ENCODE measurements at regions of chr20 and their contacts with region 1.

Region 1: DNA sequence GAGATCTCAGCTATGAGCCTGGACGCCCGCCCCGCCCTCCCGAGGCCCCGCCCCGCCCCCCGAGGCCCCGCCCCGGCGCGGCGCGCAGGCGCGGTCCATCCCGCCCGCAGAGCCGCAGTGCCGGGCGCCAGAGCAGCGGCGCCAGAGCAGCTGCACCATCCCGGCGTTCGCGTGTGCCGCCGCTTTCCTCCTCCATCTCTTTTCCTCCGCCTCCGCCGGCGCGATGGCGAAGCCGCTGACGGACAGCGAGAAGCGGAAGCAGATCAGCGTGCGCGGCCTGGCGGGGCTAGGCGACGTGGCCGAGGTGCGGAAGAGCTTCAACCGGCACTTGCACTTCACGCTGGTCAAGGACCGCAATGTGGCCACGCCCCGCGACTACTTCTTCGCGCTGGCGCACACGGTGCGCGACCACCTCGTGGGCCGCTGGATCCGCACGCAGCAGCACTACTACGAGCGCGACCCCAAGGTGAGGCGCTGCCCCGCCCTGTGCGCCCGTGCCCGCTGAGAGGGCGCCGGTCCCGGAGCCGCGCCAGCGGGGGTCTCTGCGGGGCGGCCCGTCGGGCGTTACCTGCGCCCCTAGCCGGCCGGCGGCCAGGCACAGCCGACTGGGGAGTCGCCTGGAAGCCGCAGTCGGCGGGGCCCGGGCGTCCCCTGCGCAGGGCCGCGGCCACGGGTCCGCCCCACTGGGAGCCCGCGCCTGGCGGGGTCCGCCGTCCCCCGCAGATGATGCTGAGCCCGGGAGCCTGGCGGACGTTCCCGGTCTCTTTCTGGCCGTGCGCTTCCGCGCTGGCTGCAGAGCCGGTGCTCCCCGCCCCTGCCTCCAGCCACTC is at the start of gene PYGB:
- DNase-seq: no peak
- H3K4me3 ChIP-seq: peak within 1 kb of the TSS; percentile 95
- CTCF ChIP-seq: no peak

Region 2: GRCh38 chr20:25195014-25195961 is 52.9 kb before region 1 on chr20 and contains the start of gene ENTPD6:
- CTCF ChIA-PET with region 1: interaction called, 14 read pairs
- POLR2A ChIA-PET with region 1: interaction called, 5 read pairs
- DNase-seq: peak; percentile 5
- H3K4me3 ChIP-seq: peak within 1 kb of the TSS; percentile 86
- CTCF ChIP-seq: peak; percentile 26

Region 3: DNA sequence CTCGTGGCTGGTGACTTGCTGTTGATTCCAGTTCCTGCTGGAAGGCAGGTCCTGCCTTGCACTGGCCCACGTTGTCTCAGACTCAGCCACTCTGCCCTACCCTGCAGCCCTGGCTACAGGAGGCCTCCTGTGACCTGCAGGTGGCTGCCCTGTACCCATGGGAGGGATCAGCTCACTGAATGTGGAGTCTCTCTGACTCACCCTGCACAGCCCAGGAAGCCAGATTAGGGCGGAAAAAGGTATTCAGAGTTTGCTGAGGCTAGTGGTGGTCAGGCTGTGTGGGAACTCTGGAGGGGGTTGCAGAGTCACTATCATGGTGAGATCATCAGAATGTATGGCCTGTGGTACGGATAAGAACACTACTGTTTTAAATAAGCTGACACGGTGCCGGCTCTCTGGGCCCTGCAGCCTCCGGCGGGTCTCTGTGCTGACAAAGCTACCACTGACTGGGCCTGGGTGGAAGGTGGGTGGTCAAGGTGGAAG is 25.0 kb before region 1 on chr20:
- CTCF ChIA-PET with region 1: interaction called, 23 read pairs
- POLR2A ChIA-PET with region 1: interaction called, 10 read pairs
- DNase-seq: peak; percentile 50
- H3K4me3 ChIP-seq: no peak overlapping the region
- CTCF ChIP-seq: peak; percentile 0

Region 4: DNA sequence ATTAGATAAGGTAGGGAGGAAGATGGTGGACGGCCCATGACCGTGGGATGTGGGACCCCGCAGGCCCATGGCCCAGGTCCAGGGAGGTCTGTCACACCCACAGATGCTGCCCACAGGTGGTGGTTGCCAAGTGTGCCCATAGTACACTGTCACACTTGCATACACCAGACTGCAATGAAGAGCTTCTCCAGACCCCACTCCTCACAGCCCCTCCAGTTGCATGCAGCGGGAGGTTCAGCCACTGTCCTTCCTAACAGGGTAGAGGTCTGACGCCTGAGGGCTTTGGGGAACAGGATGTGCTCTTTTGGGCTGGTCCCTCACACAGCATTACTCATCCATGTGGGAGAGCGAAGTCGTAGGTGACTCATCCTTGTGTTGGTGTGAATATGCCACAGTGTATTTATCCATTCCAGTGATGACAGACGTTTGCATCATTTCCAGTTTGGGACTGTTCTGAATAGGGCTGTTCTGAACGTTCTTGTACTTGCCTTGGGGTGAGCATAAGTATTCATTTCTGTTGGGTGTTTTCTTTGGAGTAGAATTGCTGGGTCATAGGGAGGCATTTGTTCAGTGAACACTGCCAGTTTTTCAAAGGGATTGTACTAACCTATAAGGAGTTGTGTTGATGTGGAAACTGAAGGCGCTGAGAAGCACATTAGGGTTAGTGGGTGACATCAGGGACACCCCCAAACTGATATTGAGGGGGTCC is 10.4 kb before region 1 on chr20:
- CTCF ChIA-PET with region 1: interaction called, 19 read pairs
- POLR2A ChIA-PET with region 1: interaction called, 12 read pairs
- DNase-seq: peak; percentile 98
- H3K4me3 ChIP-seq: no peak overlapping the region
- CTCF ChIP-seq: no peak

Region 5: GRCh38 chr20:25584905-25585704 is 336.9 kb after region 1 on chr20 and contains the start of gene NINL:
- CTCF ChIA-PET with region 1: no interaction called
- POLR2A ChIA-PET with region 1: no interaction called
- DNase-seq: no peak
- H3K4me3 ChIP-seq: peak within 1 kb of the TSS; percentile 68
- CTCF ChIP-seq: no peak